ENCODE measurements at regions of chr13 and their contacts with region 1.

Region 1: DNA sequence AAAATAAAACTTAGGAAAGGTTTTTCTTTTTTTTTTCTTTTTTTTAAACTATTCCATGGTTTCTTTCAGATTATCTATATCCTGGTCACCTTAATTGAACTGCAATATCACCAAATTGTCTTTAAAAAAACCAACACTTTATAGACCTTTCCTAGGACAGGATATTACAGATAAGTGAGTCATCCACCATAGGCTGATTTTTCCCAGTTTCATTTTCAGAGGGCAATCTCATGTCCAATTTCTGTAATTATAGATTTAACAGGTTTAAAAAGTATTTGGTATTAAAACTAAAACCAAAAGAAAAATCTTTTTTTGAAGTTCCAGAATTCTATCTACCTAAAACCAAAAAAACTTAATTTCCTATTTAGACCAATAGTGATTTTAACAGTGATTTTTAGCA is 13.2 kb downstream of the SPART start:
- DNase-seq: no peak
- H3K4me3 ChIP-seq: no peak overlapping the region
- CTCF ChIP-seq: no peak
- POLR2A ChIP-seq: no peak

Region 2: DNA sequence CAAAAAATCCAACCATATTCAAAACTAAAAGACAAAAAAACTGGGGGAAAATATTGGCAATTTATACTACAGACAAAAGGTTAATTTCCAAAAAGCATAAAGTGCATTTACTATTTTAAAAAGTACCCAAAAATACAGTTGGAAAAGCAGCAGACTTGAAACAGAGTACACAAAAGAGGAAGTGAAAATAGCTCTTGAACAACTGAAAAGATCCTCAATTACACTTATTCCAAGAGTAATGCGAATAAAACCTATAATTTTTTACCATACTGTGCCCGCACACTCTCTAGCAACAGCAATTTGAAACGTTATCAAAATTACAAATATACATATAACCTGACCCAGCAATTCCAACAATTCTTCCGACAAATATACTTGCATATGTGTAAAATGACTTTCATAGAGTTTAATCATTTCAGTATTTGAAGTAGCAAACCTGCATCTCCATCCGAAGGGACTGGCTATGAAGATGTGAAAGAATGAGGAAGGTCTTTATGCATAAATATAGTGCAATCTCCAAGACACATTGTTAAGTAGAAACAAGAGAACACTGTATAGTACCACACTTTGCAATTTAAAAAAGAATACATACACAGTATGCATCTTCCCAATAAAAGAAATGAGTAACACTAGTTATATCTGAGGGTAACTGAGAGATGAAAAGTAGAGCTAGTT is 640.8 kb after region 1 on chr13:
- intact Hi-C with region 1: loop called (anchors 5 kb)
- DNase-seq: no peak
- H3K4me3 ChIP-seq: no peak overlapping the region
- CTCF ChIP-seq: no peak
- POLR2A ChIP-seq: no peak

Measured in lower leg skin (tissue), 4 donors.